ENCODE measurements at regions of chr6 and their contacts with region 1.

Region 1: GRCh38 chr6:4135665-4136353 is 434 bp upstream of the ECI2 start:
- DNase-seq: peak; percentile 89 to 97 (median 95)
- ATAC-seq: peak; percentile 91
- H3K4me3 ChIP-seq: peak overlapping the region; percentile 75 to 77
- H3K4me3 Mint-ChIP-seq: peak overlapping the region; percentile 80
- H3K27ac ChIP-seq: peak overlapping the region; percentile 44 to 57
- H3K27ac Mint-ChIP-seq: peak overlapping the region; percentile 73
- H3K4me1 ChIP-seq: peaks cover 27% of the 10 kb centered on the region
- H3K4me1 Mint-ChIP-seq: peaks cover 47% of the 10 kb centered on the region
- H3K27me3 ChIP-seq: no peaks in the 10 kb centered on the region
- H3K27me3 Mint-ChIP-seq: no peaks in the 10 kb centered on the region
- CTCF ChIP-seq: no peak

Region 2: GRCh38 chr6:2765166-2765895 is 1370.5 kb before region 1 on chr6 and contains the start of gene WRNIP1:
- CTCF ChIA-PET with region 1: no interaction called
- POLR2A ChIA-PET with region 1: no interaction called
- intact Hi-C with region 1: loop called (anchors 1 to 5 kb)
- DNase-seq: peak; percentile 93 to 99 (median 96)
- ATAC-seq: peak; percentile 84
- H3K4me3 ChIP-seq: peak within 1 kb of the TSS; percentile 72 to 76
- H3K4me3 Mint-ChIP-seq: peak within 1 kb of the TSS; percentile 95
- H3K27ac ChIP-seq: peak within 1 kb of the TSS; percentile 88 to 97
- H3K27ac Mint-ChIP-seq: peak within 1 kb of the TSS; percentile 99
- H3K4me1 ChIP-seq: peaks cover 43% of the 10 kb centered on the region
- H3K4me1 Mint-ChIP-seq: peaks cover 47% of the 10 kb centered on the region
- H3K27me3 ChIP-seq: no peaks in the 10 kb centered on the region
- H3K27me3 Mint-ChIP-seq: no peaks in the 10 kb centered on the region
- CTCF ChIP-seq: peak; percentile 35
- total RNA-seq, gene WRNIP1: 21.3 to 23.0 TPM

Region 3: DNA sequence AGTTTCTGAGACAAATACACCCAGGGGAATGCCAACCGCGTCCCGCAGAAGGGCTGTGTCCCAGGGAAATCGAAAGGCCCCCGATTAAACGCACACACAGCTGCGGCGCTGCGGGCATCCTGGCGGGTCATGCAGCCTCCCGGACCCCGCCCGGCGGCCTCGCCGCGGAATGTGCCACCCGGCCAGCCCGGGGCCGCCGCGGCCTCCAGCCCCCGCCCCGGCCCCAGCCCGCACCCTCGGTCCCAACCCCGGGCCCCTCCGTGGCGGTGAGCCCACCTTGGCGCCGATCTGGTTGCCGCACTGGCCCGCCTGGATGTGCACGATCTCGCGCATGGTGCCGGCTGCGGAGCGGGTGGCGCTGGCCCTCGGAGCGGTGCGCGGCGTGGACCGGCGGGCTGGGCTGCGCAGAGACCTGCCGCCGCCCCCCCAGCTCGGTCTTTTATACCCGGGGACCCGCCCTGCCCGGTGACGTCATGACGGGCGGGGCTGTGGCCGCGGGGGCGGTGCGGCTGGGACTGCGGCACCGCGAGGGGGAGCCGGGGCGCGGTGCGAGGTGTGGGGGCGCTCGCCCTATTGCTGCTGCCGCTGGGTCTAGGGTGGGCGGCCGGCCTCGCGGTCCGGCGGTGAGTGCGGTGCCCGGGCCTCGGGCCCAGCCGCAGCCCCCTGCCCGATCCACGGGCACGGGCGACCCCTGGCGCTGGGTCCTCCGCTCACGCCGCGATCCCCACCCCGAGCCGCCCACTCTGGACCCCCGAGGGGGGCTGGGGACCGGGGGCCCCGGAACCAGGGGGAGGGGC is 978.5 kb before region 1 on chr6 and contains the start of gene TUBB2A:
- CTCF ChIA-PET with region 1: no interaction called
- POLR2A ChIA-PET with region 1: no interaction called
- intact Hi-C with region 1: loop called in 1 of 2 experiments (anchors 5 kb)
- DNase-seq: peak; percentile 77 to 94 (median 88)
- ATAC-seq: peak; percentile 61
- H3K4me3 ChIP-seq: peak within 1 kb of the TSS; percentile 65
- H3K4me3 Mint-ChIP-seq: peak within 1 kb of the TSS; percentile 92
- H3K27ac ChIP-seq: peak within 1 kb of the TSS; percentile 73 to 84
- H3K27ac Mint-ChIP-seq: peak within 1 kb of the TSS; percentile 91
- H3K4me1 ChIP-seq: peaks cover 29% of the 10 kb centered on the region
- H3K4me1 Mint-ChIP-seq: peaks cover 36% of the 10 kb centered on the region
- H3K27me3 ChIP-seq: no peaks in the 10 kb centered on the region
- H3K27me3 Mint-ChIP-seq: peaks cover 2% of the 10 kb centered on the region
- CTCF ChIP-seq: peak; percentile 65
- total RNA-seq, gene TUBB2A: 61.4 to 63.9 TPM

Region 4: DNA sequence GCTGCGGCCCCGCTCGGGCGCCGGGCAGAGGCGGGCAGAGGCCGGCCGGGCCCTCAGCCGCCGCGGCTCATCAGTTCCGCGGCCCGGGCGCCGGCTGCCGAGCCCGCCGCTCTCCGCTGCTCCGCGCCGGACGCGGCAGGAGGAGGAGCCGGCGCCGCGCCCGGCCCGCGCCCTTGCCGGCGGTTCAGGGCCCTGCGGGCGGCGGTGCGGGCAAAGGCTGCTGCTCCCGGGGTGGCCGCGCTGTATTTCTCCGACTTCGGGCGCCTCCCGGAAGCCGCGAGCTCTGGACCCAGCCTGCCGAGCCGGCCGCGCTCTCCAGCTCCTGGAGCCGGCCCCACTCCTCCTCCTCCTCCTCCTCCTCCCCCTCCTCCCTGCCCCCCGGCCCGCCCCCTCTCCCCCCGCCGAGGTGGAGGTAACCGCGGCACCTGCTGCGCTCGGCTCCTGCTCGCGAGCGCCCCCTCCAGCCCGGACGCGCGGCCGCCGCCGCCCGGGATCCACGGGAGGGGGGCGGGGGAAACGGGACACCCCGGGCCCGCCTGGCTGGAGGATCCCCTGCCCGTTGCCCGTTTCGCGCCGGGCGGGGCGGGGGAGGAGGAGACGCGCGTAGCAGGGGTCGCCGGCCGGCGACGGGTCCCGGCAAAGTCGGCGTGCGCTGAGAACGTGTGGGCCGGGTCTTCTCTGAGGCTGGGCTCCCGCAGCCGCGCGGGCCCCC is 678.9 kb before region 1 on chr6 and contains the start of gene SLC22A23:
- CTCF ChIA-PET with region 1: no interaction called
- POLR2A ChIA-PET with region 1: no interaction called
- intact Hi-C with region 1: loop called in 1 of 2 experiments (anchors 2 kb)
- DNase-seq: peak; percentile 50 to 84 (median 74)
- ATAC-seq: peak; percentile 61
- H3K4me3 ChIP-seq: peak within 1 kb of the TSS; percentile 47 to 52
- H3K4me3 Mint-ChIP-seq: peak within 1 kb of the TSS; percentile 83
- H3K27ac ChIP-seq: no peak within 1 kb of the TSS
- H3K27ac Mint-ChIP-seq: peak within 1 kb of the TSS; percentile 58
- H3K4me1 ChIP-seq: peaks cover 22% of the 10 kb centered on the region
- H3K4me1 Mint-ChIP-seq: peaks cover 6% of the 10 kb centered on the region
- H3K27me3 ChIP-seq: peaks cover 0 to 24% of the 10 kb centered on the region in 2 experiments
- H3K27me3 Mint-ChIP-seq: peaks cover 14% of the 10 kb centered on the region
- CTCF ChIP-seq: peak; percentile 68
- total RNA-seq, gene SLC22A23: 3.4 to 4.8 TPM

Region 5: DNA sequence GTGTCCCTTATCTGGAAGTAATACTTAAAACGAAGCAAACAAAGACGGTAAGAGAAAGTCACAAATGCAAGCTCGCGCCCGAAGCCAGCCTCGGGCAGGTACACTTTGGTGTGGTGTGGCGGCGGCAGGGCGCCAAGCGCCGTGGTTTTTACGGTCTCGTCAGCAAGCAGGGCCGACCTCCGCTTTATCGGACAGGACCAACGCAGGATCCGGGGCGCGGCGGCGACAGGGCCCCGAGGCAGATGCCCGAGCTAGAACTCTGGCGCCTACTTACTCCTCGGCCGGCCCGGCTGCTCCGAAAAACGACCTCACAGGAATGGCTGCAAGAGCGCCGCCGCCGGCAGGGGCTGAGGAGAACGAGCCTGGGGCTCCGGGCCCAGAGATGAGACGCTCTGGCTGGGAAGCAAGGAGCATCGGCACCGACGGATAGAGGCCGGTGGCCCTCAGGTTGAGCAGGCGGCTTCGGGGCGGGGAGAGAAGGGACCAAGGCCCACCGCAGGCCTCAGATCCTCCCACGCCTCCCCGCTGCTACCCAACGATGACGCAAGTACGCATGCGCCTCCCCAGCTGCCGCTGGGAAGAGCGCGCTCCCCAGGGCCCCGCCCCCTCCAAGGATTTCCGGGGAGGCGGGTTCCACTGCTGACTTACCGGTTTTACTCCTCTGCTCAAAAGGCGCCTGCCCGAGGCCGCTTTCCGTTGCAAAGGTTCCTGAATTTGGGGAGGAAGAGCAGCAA is 117.5 kb before region 1 on chr6:
- CTCF ChIA-PET with region 1: interaction called, 18 read pairs
- POLR2A ChIA-PET with region 1: interaction called, 28 read pairs
- intact Hi-C with region 1: loop called (anchors 1 to 2 kb)
- DNase-seq: peak; percentile 92 to 99 (median 96)
- ATAC-seq: peak; percentile 70
- H3K4me3 ChIP-seq: peak overlapping the region; percentile 44 to 74
- H3K4me3 Mint-ChIP-seq: peak overlapping the region; percentile 93
- H3K27ac ChIP-seq: peak overlapping the region; percentile 90 to 91
- H3K27ac Mint-ChIP-seq: peak overlapping the region; percentile 99
- H3K4me1 ChIP-seq: peaks cover 57% of the 10 kb centered on the region
- H3K4me1 Mint-ChIP-seq: peaks cover 74% of the 10 kb centered on the region
- H3K27me3 ChIP-seq: no peaks in the 10 kb centered on the region
- H3K27me3 Mint-ChIP-seq: no peaks in the 10 kb centered on the region
- CTCF ChIP-seq: no peak

Region 6: DNA sequence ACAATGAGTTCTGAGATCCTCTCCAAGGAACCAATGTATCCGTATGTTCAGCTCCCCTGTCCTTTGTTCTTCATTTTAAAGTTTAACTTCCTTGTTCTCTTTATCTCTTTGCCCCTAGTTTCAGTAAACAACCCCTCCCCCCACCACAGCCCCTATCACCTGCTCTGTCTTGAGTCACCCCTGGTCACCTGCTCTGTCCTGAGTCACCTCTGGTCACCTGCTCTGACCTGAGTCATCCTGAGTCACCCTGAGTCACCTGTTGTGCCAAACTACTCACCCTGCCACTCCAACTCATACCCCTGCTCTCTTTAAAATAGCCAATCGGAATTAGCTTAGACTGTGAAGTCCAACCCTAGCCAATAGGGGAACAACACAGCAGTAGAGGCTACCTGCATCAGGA is 351.7 kb after region 1 on chr6:
- CTCF ChIA-PET with region 1: no interaction called
- POLR2A ChIA-PET with region 1: no interaction called
- intact Hi-C with region 1: no loop called
- DNase-seq: no peak
- ATAC-seq: no peak
- H3K4me3 ChIP-seq: no peak overlapping the region
- H3K4me3 Mint-ChIP-seq: no peak overlapping the region
- H3K27ac ChIP-seq: no peak overlapping the region
- H3K27ac Mint-ChIP-seq: no peak overlapping the region
- H3K4me1 ChIP-seq: no peaks in the 10 kb centered on the region
- H3K4me1 Mint-ChIP-seq: no peaks in the 10 kb centered on the region
- H3K27me3 ChIP-seq: no peaks in the 10 kb centered on the region
- H3K27me3 Mint-ChIP-seq: peaks cover 16% of the 10 kb centered on the region
- CTCF ChIP-seq: no peak

Region 7: DNA sequence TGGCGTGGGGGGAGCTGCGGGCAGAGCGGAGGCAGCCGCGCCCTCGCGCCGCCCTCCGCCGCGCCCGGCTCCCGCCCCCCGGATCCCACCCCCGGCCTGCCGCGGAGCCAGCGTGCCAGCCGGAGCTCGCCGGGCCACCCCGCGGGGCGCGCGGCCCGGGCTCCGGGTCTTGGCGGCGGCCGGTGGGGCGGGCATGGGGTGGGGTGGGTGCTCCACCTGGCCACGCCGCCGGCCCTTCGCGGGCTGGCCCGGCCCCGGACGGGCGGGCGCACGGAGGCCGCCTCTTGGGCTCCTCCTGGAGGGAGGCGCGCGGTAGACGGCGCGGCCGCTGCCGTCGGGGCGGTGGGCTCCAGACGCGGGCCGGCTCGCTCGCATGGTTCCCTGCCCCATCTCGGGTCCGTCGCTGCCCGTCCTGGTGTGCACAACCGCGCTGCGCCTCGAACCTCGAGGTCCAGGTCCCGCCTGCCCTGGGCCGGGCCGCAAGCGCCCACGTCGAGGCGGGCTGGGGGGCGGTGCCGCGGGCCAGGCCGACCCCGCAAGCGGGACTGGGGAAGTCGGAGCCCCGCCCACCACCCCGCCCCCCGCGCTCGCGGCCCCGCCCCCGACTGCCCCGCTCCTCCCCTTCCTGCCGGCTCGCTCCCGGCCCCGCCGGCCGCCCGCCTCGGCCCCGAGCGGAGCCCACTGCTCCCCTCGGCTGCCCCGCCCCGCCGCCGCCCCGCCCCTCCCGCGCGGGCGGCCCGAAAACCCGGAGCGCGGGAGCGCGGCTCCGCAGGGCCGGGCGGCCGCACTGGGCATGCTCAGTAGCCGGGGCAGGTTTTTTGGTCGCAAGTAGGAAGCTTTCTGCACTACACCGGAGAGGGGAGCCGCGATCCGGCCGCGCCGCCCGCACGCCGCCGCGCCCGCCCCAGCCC is 640.0 kb after region 1 on chr6 and contains the start of gene CDYL:
- CTCF ChIA-PET with region 1: no interaction called
- POLR2A ChIA-PET with region 1: interaction called, 4 read pairs
- intact Hi-C with region 1: loop called (anchors 1 kb)
- DNase-seq: peak; percentile 76 to 94 (median 89)
- ATAC-seq: peak; percentile 75
- H3K4me3 ChIP-seq: peak within 1 kb of the TSS; percentile 63 to 64
- H3K4me3 Mint-ChIP-seq: peak within 1 kb of the TSS; percentile 91
- H3K27ac ChIP-seq: peak within 1 kb of the TSS; percentile 29 to 38
- H3K27ac Mint-ChIP-seq: peak within 1 kb of the TSS; percentile 91
- H3K4me1 ChIP-seq: peaks cover 25% of the 10 kb centered on the region
- H3K4me1 Mint-ChIP-seq: peaks cover 44% of the 10 kb centered on the region
- H3K27me3 ChIP-seq: no peaks in the 10 kb centered on the region
- H3K27me3 Mint-ChIP-seq: no peaks in the 10 kb centered on the region
- CTCF ChIP-seq: no peak
- total RNA-seq, gene CDYL: 35.9 to 36.3 TPM

Region 8: DNA sequence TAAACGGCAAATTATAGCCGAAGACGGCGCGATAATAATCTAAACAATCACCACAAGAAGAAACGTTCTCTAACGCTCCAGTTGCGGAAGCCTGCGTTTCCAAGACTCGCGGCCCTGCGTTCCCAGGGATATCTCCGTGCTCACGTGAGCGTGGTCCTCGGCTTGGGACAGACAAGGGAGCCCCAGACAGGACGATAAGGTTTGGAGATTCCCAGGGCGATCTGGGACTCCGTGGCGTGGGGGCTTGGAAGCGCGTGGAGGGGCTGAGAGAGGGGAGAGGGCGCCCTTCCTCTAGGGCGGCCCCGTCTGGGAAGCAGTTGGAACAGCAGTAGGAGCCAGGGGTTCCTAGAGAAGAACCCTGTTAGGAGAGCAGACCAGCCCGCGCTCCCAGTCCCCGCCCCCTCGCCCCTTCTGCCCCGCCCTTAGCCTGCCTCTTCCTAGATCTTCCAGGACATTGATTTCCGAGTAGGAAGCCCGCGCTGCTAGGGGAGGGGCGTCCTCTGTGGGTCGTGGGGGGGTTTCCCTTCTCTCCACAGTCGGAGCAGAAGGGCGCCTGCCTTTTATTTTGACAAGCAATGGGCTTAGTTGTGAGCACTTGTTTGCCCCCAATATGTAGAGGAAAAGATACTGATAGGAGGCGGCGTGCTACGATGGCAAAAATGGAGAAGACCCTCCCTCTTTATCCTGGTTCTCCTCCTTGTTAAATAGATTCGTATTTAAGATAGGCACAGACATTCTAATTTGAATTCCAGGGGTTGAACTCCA is 1860.3 kb after region 1 on chr6:
- CTCF ChIA-PET with region 1: no interaction called
- POLR2A ChIA-PET with region 1: no interaction called
- intact Hi-C with region 1: loop called in 1 of 2 experiments (anchors 10 kb)
- DNase-seq: peak in 2 of 9 experiments; percentile 21 to 35
- ATAC-seq: peak; percentile 22
- H3K4me3 ChIP-seq: peak overlapping the region; percentile 52 to 59
- H3K4me3 Mint-ChIP-seq: peak overlapping the region; percentile 92
- H3K27ac ChIP-seq: no peak overlapping the region
- H3K27ac Mint-ChIP-seq: no peak overlapping the region
- H3K4me1 ChIP-seq: peaks cover 52% of the 10 kb centered on the region
- H3K4me1 Mint-ChIP-seq: peaks cover 51% of the 10 kb centered on the region
- H3K27me3 ChIP-seq: peaks cover 69 to 77% of the 10 kb centered on the region in 2 experiments
- H3K27me3 Mint-ChIP-seq: peaks cover 75% of the 10 kb centered on the region
- CTCF ChIP-seq: no peak